BJ (cell line): ENCODE measurements at regions of chr4 and their contacts with region 1.

Region 1: DNA sequence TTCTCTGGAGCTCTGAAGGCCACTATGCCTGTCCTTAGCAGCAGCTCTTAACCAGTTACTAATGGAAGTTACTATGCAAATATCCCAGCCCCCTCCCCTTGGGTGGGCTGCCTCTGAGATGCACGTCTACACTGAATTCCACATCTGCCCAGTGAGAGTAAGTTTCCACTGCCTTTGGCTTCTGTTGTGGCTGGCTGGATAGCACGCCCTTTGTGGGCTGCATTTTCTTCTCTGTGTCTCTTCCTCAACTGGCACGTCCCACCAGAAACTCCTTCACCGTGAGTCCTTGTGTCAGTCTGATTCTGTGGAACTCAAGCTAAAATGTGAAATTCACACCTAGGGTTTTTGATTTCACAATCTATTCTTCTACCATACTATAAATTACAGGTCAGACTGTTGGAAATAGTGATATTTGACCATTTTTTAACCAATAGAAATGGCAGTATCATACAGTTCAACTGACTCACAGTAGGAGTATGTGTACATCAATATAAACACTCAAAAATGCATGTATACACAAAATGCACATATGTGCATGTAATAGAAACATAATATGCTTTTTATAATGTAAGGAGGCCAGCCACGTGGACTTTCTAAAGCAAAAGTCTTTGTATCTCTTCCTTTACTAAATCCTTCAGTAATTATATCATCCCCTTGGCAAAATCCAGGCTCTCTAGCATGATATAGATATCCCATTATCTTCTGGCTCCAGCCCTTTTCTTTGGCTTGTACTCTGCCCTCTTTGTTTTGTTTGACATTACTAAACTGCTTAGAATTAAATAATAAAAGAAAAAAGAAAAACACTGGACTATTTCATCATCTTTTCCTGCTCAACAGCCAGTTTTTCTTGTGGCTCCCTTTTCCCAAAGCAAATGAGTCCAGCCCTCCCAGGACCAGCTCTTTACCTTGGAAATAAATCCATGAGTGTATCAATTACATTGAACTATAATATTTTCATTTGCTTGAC is 33.2 kb upstream of the LDB2 start:
- DNase-seq: no peak
- H3K4me3 ChIP-seq: no peak overlapping the region
- H3K27me3 ChIP-seq: no peaks in the 10 kb centered on the region
- CTCF ChIP-seq: no peak

Region 2: GRCh38 chr4:16916719-16917337 is 14.8 kb before region 1 on chr4:
- CTCF ChIA-PET with region 1: interaction called, 3 read pairs
- POLR2A ChIA-PET with region 1: interaction called, 15 read pairs
- DNase-seq: no peak
- H3K4me3 ChIP-seq: no peak overlapping the region
- H3K27me3 ChIP-seq: no peaks in the 10 kb centered on the region
- CTCF ChIP-seq: peak; percentile 66

Region 3: DNA sequence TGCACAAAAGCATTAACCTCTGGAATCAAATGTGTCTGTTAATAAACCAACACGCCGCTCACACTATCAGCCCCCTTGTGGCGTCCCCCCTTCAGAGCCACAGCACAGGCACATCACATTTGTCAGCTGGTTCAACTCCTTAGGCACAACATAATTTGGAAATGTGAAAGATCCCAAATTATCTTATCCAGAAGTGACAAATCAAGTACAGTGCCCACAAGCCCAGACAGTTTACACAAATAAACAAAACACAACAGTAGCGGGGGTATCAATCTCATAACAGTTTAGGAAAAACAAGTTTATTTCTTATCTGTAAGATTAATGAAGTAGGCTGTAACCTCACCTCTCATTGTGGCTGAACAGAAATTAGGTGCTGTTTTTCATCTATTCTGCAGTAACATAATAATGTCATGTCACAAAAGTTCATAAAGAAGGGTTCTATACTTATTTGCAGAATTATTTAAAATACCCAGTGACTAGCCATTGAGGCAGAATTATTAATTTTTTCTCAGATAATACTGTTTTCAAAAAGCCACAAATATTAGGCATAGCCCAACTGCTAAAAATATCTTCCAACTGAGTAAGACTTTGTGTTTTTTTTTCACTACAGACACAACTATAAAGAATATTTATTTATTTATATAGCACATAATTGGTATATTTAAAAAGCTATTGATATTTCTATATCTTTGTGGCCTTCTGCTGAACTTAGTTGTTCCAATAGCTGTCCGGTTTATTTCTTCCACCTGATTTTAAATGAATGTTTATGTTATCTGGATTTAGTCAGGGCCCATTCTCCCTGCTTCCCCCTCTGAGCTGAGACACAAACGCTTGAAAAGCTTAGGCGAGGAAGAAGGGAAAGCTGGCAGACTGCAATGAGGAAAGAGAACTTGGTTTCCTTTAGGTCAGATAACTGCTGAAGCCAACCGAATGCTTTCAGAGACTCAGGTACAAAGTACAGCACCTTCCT is 365.6 kb after region 1 on chr4:
- CTCF ChIA-PET with region 1: no interaction called
- POLR2A ChIA-PET with region 1: interaction called, 10 read pairs
- DNase-seq: no peak
- H3K4me3 ChIP-seq: no peak overlapping the region
- H3K27me3 ChIP-seq: no peaks in the 10 kb centered on the region
- CTCF ChIP-seq: no peak